Naive thymus-derived CD4-positive, alpha-beta T cell (primary cell): ENCODE measurements at regions of chr4 and their contacts with region 1.

Region 1: GRCh38 chr4:70993181-70994068 is at the start of gene DCK:
- DNase-seq: peak; percentile 77 to 93 (median 80)
- ATAC-seq: peak; percentile 96
- H3K4me3 ChIP-seq: peak within 1 kb of the TSS; percentile 86
- H3K4me3 Mint-ChIP-seq: peak within 1 kb of the TSS; percentile 86 to 98 (median 94)
- H3K27ac ChIP-seq: peak within 1 kb of the TSS; percentile 79
- H3K27ac Mint-ChIP-seq: peak within 1 kb of the TSS; percentile 84 to 97 (median 94)
- H3K4me1 ChIP-seq: peaks cover 19 to 26% of the 10 kb centered on the region in 2 donors
- H3K4me1 Mint-ChIP-seq: peaks cover 31 to 56% (median 45%) of the 10 kb centered on the region in 7 donors
- H3K27me3 ChIP-seq: no peaks in the 10 kb centered on the region
- H3K27me3 Mint-ChIP-seq: no peaks in the 10 kb centered on the region
- total RNA-seq, gene DCK: 19.8 to 72.8 (median 47.7) TPM

Region 2: DNA sequence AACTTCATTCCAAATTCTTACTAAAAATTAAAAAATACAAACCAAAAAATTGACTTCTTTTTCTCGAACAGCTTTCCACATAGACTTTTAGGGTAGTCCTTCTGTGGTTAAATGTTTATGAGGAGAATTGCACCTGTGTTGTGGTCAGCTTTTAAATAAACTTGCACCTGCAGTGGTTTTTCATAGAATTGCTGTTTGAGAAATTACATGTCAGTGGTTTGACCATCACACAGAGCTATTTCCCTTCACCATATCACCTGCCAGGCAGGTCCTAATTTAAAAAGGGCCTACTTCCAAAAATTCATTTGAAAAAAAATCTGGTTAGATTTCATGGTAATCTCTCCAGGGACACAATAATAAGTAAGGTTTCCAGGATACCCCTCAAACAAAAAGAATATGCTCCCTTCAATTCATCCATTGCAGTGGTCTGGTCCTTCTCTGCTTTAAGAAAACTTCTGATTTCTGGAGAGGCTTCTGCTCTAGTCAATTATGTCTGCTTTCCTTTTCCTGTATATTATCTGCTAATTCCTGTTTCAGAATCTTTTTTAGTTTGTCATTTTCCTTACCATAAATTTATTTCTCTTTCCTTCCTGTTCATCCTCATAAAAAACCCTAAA is 314.9 kb before region 1 on chr4:
- CTCF ChIA-PET with region 1: no interaction called
- POLR2A ChIA-PET with region 1: no interaction called
- intact Hi-C with region 1: no loop called
- DNase-seq: no peak
- ATAC-seq: no peak
- H3K4me3 ChIP-seq: no peak overlapping the region
- H3K4me3 Mint-ChIP-seq: peak overlapping the region in 4 of 10 donors; percentile 6 to 50 (median 10)
- H3K27ac ChIP-seq: no peak overlapping the region
- H3K27ac Mint-ChIP-seq: peak overlapping the region in 6 of 9 donors; percentile 1 to 58 (median 10)
- H3K4me1 ChIP-seq: no peaks in the 10 kb centered on the region
- H3K4me1 Mint-ChIP-seq: peaks cover 3 to 23% (median 8%) of the 10 kb centered on the region in 7 donors
- H3K27me3 ChIP-seq: no peaks in the 10 kb centered on the region
- H3K27me3 Mint-ChIP-seq: peaks cover 0 to 15% (median 6%) of the 10 kb centered on the region in 5 donors

Region 3: DNA sequence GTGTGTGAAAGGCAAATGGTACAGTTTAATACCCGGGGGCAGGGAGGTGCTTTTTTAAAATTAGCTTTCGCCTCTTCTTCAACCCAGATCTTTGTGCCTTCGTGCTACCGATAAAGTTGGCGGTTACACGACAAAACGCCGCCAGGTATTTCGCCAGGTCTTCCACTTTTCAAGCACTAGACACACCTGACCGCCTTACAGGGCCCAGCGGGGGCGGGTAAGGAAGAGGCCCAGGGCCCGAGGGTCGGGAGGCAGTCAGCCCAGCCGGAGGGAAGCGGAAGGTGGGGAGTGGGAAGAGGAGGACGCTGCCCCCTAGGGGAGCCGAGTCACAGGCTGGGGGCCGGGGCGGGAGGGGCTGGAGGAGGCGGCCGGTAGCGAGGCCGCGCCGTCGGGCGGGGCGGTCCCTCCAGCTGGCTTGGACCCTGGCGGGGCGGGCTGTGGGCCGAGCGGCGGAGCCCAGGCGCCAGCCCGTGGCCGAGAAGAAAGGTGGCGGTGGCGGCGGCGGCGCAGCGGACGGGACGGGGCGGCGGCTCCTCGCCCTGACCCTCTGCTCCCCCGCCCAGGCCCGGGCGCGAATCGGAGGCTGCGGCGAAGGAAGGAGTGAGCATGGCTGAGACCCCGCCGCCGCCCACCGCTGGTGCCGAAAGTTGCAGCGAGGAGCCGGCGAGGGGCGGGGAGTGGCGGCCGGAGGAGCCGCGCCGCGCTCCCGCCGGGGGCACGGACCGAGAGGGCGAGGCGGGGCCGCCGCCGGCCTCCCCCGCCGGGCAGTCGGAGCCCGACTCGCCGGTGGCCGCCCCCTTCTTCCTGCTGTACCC is 288.9 kb before region 1 on chr4:
- CTCF ChIA-PET with region 1: no interaction called
- POLR2A ChIA-PET with region 1: interaction called, 6 read pairs
- intact Hi-C with region 1: loop called (anchors 1 to 2 kb)
- DNase-seq: peak; percentile 30 to 63 (median 44)
- ATAC-seq: peak; percentile 67
- H3K4me3 ChIP-seq: peak overlapping the region; percentile 87
- H3K4me3 Mint-ChIP-seq: peak overlapping the region; percentile 82 to 95 (median 93)
- H3K27ac ChIP-seq: peak overlapping the region; percentile 88
- H3K27ac Mint-ChIP-seq: peak overlapping the region; percentile 74 to 98 (median 93)
- H3K4me1 ChIP-seq: peaks cover 12 to 18% of the 10 kb centered on the region in 2 donors
- H3K4me1 Mint-ChIP-seq: peaks cover 17 to 43% (median 33%) of the 10 kb centered on the region in 7 donors
- H3K27me3 ChIP-seq: no peaks in the 10 kb centered on the region
- H3K27me3 Mint-ChIP-seq: no peaks in the 10 kb centered on the region

Region 4: GRCh38 chr4:70839589-70840093 is 153.8 kb before region 1 on chr4 and contains the start of gene GRSF1:
- CTCF ChIA-PET with region 1: no interaction called
- POLR2A ChIA-PET with region 1: interaction called, 28 read pairs
- intact Hi-C with region 1: loop called (anchors 1 kb)
- DNase-seq: peak; percentile 92 to 96 (median 95)
- ATAC-seq: peak; percentile 96
- H3K4me3 ChIP-seq: peak within 1 kb of the TSS; percentile 83
- H3K4me3 Mint-ChIP-seq: peak within 1 kb of the TSS; percentile 89 to 99 (median 97)
- H3K27ac ChIP-seq: peak within 1 kb of the TSS; percentile 88
- H3K27ac Mint-ChIP-seq: peak within 1 kb of the TSS; percentile 91 to 98 (median 96)
- H3K4me1 ChIP-seq: peaks cover 17 to 22% of the 10 kb centered on the region in 2 donors
- H3K4me1 Mint-ChIP-seq: peaks cover 8 to 40% (median 29%) of the 10 kb centered on the region in 7 donors
- H3K27me3 ChIP-seq: no peaks in the 10 kb centered on the region
- H3K27me3 Mint-ChIP-seq: no peaks in the 10 kb centered on the region
- total RNA-seq, gene GRSF1: 35.9 to 76.0 (median 48.0) TPM

Region 5: GRCh38 chr4:70927502-70928137 is 65.8 kb before region 1 on chr4:
- CTCF ChIA-PET with region 1: no interaction called
- POLR2A ChIA-PET with region 1: interaction called, 3 read pairs
- intact Hi-C with region 1: loop called in 1 of 2 experiments (anchors 5 kb)
- DNase-seq: peak in 7 of 9 donors; percentile 27 to 59 (median 36)
- ATAC-seq: peak; percentile 68
- H3K4me3 ChIP-seq: no peak overlapping the region
- H3K4me3 Mint-ChIP-seq: peak overlapping the region; percentile 4 to 66 (median 54)
- H3K27ac ChIP-seq: no peak overlapping the region
- H3K27ac Mint-ChIP-seq: peak overlapping the region; percentile 16 to 85 (median 60)
- H3K4me1 ChIP-seq: peaks cover 0 to 13% of the 10 kb centered on the region in 2 donors
- H3K4me1 Mint-ChIP-seq: peaks cover 21 to 55% (median 53%) of the 10 kb centered on the region in 7 donors
- H3K27me3 ChIP-seq: no peaks in the 10 kb centered on the region
- H3K27me3 Mint-ChIP-seq: no peaks in the 10 kb centered on the region

Region 6: DNA sequence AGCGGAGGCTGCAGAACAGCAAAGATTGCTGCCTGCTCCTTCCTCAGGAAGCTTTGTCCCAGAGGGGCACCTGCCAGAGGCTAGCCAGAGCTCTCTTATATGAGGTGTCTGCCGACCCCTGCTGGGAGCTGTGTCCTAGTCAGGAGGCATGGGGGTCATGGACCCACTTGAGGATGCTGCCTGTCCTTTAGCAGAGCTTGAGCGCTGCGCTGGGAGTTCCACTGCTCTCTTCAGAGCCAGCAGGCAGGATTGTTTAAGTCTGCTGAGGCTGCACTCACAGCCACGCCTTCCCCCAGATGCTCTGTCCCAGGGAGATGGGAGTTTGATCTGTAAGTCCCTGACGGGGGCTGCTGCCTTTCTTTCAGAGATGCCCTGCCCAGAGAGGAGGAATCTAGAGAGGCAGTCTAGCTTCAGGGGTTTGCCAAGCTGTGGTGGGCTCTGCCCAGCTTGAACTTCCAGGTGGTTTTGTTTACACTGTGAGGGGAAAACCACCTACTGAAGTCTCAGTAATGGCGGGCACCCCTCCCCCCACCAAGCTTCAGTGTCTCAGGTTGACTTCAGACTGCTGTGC is 10.9 kb after region 1 on chr4:
- CTCF ChIA-PET with region 1: interaction called, 16 read pairs
- POLR2A ChIA-PET with region 1: interaction called, 8 read pairs
- intact Hi-C with region 1: loop called (anchors 1 kb)
- DNase-seq: peak in 8 of 9 donors; percentile 47 to 77 (median 52)
- ATAC-seq: peak; percentile 89
- H3K4me3 ChIP-seq: peak overlapping the region; percentile 8
- H3K4me3 Mint-ChIP-seq: peak overlapping the region; percentile 30 to 80 (median 68)
- H3K27ac ChIP-seq: peak overlapping the region; percentile 70
- H3K27ac Mint-ChIP-seq: peak overlapping the region; percentile 58 to 93 (median 86)
- H3K4me1 ChIP-seq: peaks cover 23 to 28% of the 10 kb centered on the region in 2 donors
- H3K4me1 Mint-ChIP-seq: peaks cover 68 to 92% (median 88%) of the 10 kb centered on the region in 7 donors
- H3K27me3 ChIP-seq: no peaks in the 10 kb centered on the region
- H3K27me3 Mint-ChIP-seq: no peaks in the 10 kb centered on the region

Region 7: GRCh38 chr4:72577211-72577610 is 1583.8 kb after region 1 on chr4:
- CTCF ChIA-PET with region 1: no interaction called
- POLR2A ChIA-PET with region 1: no interaction called
- intact Hi-C with region 1: no loop called
- DNase-seq: no peak
- ATAC-seq: no peak
- H3K4me3 ChIP-seq: no peak overlapping the region
- H3K4me3 Mint-ChIP-seq: no peak overlapping the region
- H3K27ac ChIP-seq: no peak overlapping the region
- H3K27ac Mint-ChIP-seq: no peak overlapping the region
- H3K4me1 ChIP-seq: no peaks in the 10 kb centered on the region
- H3K4me1 Mint-ChIP-seq: peaks cover 0 to 2% (median 0%) of the 10 kb centered on the region in 7 donors
- H3K27me3 ChIP-seq: no peaks in the 10 kb centered on the region
- H3K27me3 Mint-ChIP-seq: peaks cover 0 to 12% (median 5%) of the 10 kb centered on the region in 5 donors